RWPE1 (cell line): ENCODE measurements at regions of chr3 and their contacts with region 1.

Region 1: GRCh38 chr3:128095222-128095703 is 28.3 kb downstream of the RUVBL1 start:
- DNase-seq: peak; percentile 88
- H3K27ac ChIP-seq: peak overlapping the region; percentile 68
- CTCF ChIP-seq: peak; percentile 83

Region 2: DNA sequence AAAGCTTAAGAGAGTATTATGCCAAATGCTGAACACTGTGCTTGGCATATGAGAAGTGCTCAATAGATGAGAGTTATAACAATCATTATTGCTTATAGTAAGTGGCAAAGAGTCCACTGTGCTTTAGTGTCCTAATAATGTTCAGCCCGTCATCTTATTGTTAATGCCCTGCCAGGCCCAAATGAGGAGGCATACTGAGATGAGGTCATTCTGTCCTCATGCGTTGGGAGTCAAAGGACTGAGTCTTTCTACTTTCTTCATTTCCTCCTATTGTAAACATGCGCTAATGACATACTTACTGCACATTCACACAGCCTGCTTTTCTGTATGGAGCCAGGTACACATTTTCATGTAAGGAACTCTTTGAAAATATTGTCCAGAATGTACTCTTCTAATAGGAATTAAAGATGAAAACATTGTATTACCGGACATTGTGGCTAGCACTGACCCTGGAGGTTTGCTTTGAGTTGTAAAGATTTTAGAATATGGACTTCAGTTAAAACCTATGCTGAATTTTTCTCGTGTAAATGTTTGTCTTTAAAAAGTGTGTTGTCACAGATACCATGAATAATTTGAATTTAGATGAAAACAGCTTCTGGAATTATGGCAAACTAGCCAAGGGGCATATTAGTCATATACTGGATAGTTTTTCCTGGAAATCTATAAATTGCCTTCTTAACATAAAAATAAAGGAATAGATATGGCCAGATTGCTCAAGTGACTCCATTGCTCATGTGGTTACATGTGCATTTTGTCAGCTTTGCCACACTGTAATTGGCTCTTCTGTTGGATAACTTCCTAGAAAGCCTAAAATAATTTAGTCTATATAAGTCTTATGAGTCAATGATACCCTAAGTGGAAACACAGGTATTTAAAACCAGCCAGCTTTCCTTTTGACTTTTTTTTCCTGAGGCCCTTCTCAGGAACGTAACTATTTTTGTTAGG is 141.9 kb before region 1 on chr3:
- CTCF ChIA-PET with region 1: no interaction called
- POLR2A ChIA-PET with region 1: no interaction called
- DNase-seq: peak; percentile 10
- H3K27ac ChIP-seq: no peak overlapping the region
- CTCF ChIP-seq: no peak

Region 3: GRCh38 chr3:128133273-128134084 is 38.2 kb after region 1 on chr3:
- CTCF ChIA-PET with region 1: interaction called, 10 read pairs
- POLR2A ChIA-PET with region 1: no interaction called
- DNase-seq: no peak
- H3K27ac ChIP-seq: no peak overlapping the region
- CTCF ChIP-seq: peak; percentile 30; the same call in 1 of the 2 replicates